Sigmoid colon (tissue), 7 donors: ENCODE measurements at regions of chr10 and their contacts with region 1.

Region 1: GRCh38 chr10:45000752-45001380 is at the start of gene ZNF22:
- DNase-seq: peak; percentile 82
- H3K4me3 ChIP-seq: peak within 1 kb of the TSS; percentile 51 to 66 (median 61)
- H3K27ac ChIP-seq: peak within 1 kb of the TSS; percentile 92 to 97 (median 93)
- H3K4me1 ChIP-seq: peaks cover 0 to 60% (median 38%) of the 10 kb centered on the region in 4 donors
- H3K27me3 ChIP-seq: no peaks in the 10 kb centered on the region
- CTCF ChIP-seq: peak in 2 of 4 experiments; percentile 4 to 32
- EP300 ChIP-seq: no peak
- POLR2A ChIP-seq: peak in 1 of 2 donors; percentile 48
- total RNA-seq, gene ZNF22: 18.3 to 29.9 (median 24.0) TPM

Region 2: DNA sequence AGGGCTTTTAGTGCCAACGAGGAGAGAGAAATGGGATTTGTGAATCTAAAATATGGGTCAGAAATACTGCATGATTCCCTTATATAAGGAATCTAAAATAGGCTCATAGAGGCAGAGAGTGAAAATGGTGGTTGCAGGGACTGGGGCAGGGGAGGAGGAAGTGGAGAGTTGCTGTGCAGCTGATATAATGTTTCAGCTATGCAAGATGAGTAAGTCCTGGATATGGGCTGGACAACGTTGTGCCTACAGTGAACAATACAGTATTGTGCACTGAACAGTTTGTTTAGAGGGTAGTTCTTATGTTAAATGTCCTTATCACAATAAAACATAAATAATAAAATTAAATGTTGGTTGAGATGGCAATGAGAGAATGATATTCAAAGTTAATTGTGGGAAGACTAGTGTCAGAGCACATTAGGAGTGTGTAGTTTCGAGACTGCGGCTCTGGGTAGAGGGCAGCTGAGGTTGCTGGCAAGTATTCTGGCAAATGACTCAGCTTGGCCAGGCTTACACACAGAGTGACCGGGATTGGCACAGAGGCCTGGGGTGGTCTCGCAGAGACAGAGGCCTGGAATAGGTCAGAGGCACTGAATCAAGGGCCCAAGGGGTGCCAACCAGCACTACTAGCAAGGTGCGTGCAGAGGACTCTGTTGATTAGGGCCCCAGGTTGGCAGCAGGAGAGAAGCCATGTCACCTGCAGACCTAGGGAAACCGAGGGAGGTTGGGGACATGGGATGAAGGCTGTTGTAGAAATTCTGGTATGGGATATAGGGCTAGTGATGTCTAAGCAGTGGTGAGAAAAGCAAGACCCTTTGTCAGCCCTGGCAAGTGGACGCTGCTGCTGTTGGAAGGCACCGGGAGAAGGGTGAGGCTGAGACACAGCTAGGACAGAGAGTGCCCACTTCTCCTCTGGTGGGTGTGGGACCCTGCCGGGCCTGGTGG is 19.4 kb before region 1 on chr10:
- intact Hi-C with region 1: loop called (anchors 2 kb)
- DNase-seq: peak; percentile 83
- H3K4me3 ChIP-seq: no peak overlapping the region
- H3K27ac ChIP-seq: peak overlapping the region; percentile 88 to 92 (median 90)
- H3K4me1 ChIP-seq: peaks cover 0 to 87% (median 66%) of the 10 kb centered on the region in 4 donors
- H3K27me3 ChIP-seq: no peaks in the 10 kb centered on the region
- CTCF ChIP-seq: no peak
- EP300 ChIP-seq: no peak
- POLR2A ChIP-seq: no peak

Region 3: DNA sequence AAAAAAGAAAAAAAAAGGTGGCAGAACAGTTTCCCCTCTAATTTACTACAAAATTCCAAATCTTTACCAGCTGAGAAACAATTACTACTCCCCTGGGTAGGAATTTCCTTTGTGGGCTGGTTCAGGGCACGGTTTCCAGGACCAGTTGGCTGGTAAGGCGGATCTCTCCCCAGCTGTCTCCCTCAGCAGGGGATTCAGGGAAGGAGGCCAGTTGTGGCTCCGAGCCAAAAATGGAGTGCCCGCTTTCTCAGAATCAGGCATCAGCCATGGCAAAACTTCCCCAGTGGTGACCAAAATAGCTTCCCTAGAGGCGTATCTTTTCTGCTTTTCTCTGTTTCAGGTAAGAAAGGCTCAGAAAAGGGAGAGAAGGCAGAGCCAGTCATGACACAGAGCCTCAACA is 91.1 kb after region 1 on chr10:
- intact Hi-C with region 1: no loop called
- DNase-seq: no peak
- H3K4me3 ChIP-seq: no peak overlapping the region
- H3K27ac ChIP-seq: no peak overlapping the region
- H3K4me1 ChIP-seq: peaks cover 0 to 10% (median 2%) of the 10 kb centered on the region in 4 donors
- H3K27me3 ChIP-seq: no peaks in the 10 kb centered on the region
- CTCF ChIP-seq: no peak
- EP300 ChIP-seq: no peak
- POLR2A ChIP-seq: no peak